ENCODE measurements at regions of chr9 and their contacts with region 1.

Region 1: DNA sequence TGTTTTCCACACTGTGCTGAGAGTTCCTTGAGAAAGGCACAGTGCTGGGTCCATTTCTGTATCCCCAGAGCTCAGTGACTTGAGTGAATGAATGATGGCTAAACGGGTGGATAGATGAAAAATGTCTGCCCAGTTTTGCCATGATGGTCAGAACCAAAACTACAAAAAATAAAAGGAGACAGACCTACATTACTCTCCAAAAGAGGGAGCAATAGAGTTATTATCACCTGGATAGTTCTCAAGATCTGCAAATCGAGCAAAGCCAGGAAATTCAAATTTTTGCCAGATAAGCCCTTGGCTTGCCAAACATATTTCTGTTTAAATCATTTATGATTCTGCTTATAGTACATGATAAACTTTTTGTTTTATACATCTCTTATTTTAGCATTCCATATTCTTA is 214.2 kb upstream of the ZNF462 start:
- DNase-seq: peak; percentile 6
- ATAC-seq: no peak; the same call in 1 of the 2 replicates
- H3K4me3 ChIP-seq: no peak overlapping the region
- H3K27ac ChIP-seq: no peak overlapping the region
- H3K4me1 ChIP-seq: no peaks in the 10 kb centered on the region
- H3K27me3 ChIP-seq: no peaks in the 10 kb centered on the region
- CTCF ChIP-seq: peak in 2 of 3 experiments; percentile 31 to 34; a peak in 3 of 6 replicates
- POLR2A ChIP-seq: no peak
- RAD21 ChIP-seq: peak; percentile 58

Region 2: DNA sequence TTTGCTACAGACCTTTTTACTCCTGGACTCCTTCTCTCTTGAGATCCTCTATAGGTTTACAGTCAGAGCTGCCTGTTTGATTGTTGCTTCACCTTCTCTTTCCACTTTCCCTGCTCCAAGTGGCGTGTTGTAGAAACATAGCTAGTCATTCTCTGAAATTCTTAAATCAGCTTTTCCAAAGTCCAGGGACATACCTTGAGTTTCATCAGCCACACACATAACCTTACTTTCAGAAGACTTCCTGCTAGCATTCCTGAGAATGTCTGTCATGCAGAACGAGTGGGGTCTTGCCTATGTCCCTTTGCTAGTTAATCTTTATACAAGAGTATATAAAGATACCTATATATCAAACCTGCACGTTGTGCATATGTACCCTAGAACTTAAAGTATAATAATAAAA is 16.2 kb before region 1 on chr9:
- CTCF ChIA-PET with region 1: no interaction called
- POLR2A ChIA-PET with region 1: no interaction called
- RAD21 ChIA-PET with region 1: no interaction called
- intact Hi-C with region 1: no loop called
- DNase-seq: no peak
- ATAC-seq: no peak
- H3K4me3 ChIP-seq: no peak overlapping the region
- H3K27ac ChIP-seq: no peak overlapping the region
- H3K4me1 ChIP-seq: no peaks in the 10 kb centered on the region
- H3K27me3 ChIP-seq: no peaks in the 10 kb centered on the region
- CTCF ChIP-seq: no peak
- POLR2A ChIP-seq: no peak
- RAD21 ChIP-seq: no peak

Region 3: GRCh38 chr9:106697750-106698502 is 49.1 kb after region 1 on chr9:
- CTCF ChIA-PET with region 1: no interaction called
- POLR2A ChIA-PET with region 1: no interaction called
- RAD21 ChIA-PET with region 1: no interaction called
- intact Hi-C with region 1: loop called (anchors 5 kb)
- DNase-seq: no peak
- ATAC-seq: no peak
- H3K4me3 ChIP-seq: no peak overlapping the region
- H3K27ac ChIP-seq: no peak overlapping the region
- H3K4me1 ChIP-seq: no peaks in the 10 kb centered on the region
- H3K27me3 ChIP-seq: no peaks in the 10 kb centered on the region
- CTCF ChIP-seq: no peak
- POLR2A ChIP-seq: no peak
- RAD21 ChIP-seq: no peak

Region 4: GRCh38 chr9:106862825-106863720 is 214.3 kb after region 1 on chr9 and contains the start of gene ZNF462:
- CTCF ChIA-PET with region 1: no interaction called
- POLR2A ChIA-PET with region 1: no interaction called
- RAD21 ChIA-PET with region 1: no interaction called
- intact Hi-C with region 1: loop called (anchors 10 kb)
- DNase-seq: no peak
- ATAC-seq: peak; percentile 21
- H3K4me3 ChIP-seq: peak within 1 kb of the TSS; percentile 49 to 56
- H3K27ac ChIP-seq: peak within 1 kb of the TSS; percentile 29
- H3K4me1 ChIP-seq: peaks cover 5 to 16% of the 10 kb centered on the region in 2 experiments; a peak in 3 of 4 replicates
- H3K27me3 ChIP-seq: no peaks in the 10 kb centered on the region
- CTCF ChIP-seq: 0 out of 6 replicates have a peak, but pooled peaks of 1 of the 3 experiments have one; percentile 4
- POLR2A ChIP-seq: no peak
- RAD21 ChIP-seq: peak; percentile 28; the same call in 1 of the 2 replicates
- total RNA-seq, gene ZNF462: 18.1 TPM